Activated T-helper 2 cell treated with anti-CD3 and anti-CD28 coated beads, Interferon-gamma antibody, Interleukin-2, Interleukin-4, amounts not matched to agents 10 μg/mL and 5 μg/mL and 100 μg/mL, durations not matched to agents 14 hours and 24 hours and 36 hours (primary cell): ENCODE measurements at regions of chr7 and their contacts with region 1.

Region 1: GRCh38 chr7:127392566-127393367 is at the start of gene ZNF800:
- DNase-seq: peak; percentile 86
- H3K4me3 Mint-ChIP-seq: peak within 1 kb of the TSS; percentile 92
- H3K27ac Mint-ChIP-seq: peak within 1 kb of the TSS; percentile 92
- H3K4me1 Mint-ChIP-seq: peaks cover 58% of the 10 kb centered on the region
- H3K27me3 Mint-ChIP-seq: no peaks in the 10 kb centered on the region
- total RNA-seq, gene ZNF800: 40.2 and 40.8 TPM in 2 replicates

Region 2: GRCh38 chr7:127194571-127194970 is 198.2 kb before region 1 on chr7:
- intact Hi-C with region 1: no loop called
- DNase-seq: no peak
- H3K4me3 Mint-ChIP-seq: no peak overlapping the region
- H3K27ac Mint-ChIP-seq: no peak overlapping the region
- H3K4me1 Mint-ChIP-seq: no peaks in the 10 kb centered on the region
- H3K27me3 Mint-ChIP-seq: no peaks in the 10 kb centered on the region

Region 3: DNA sequence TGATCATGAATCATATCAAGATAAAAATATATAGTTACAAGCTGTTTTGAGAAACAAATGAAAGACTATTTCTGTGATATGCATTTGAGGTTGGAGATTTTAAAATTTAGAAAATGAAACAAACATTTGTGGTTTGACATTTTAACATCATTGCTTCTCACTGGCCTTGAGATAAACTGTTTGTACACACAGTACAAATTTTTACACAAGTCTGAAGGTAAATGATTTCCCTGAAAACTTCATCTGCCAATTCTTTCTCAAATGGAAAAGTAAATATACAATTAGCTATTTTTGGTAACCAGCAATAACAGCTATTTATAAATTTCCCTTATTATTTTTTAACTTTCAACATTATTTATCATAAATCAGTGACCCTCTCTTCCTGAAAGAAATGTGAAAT is 38.9 kb before region 1 on chr7:
- intact Hi-C with region 1: loop called (anchors 2 kb)
- DNase-seq: no peak
- H3K4me3 Mint-ChIP-seq: no peak overlapping the region
- H3K27ac Mint-ChIP-seq: no peak overlapping the region
- H3K4me1 Mint-ChIP-seq: peaks cover 23% of the 10 kb centered on the region
- H3K27me3 Mint-ChIP-seq: no peaks in the 10 kb centered on the region

Region 4: DNA sequence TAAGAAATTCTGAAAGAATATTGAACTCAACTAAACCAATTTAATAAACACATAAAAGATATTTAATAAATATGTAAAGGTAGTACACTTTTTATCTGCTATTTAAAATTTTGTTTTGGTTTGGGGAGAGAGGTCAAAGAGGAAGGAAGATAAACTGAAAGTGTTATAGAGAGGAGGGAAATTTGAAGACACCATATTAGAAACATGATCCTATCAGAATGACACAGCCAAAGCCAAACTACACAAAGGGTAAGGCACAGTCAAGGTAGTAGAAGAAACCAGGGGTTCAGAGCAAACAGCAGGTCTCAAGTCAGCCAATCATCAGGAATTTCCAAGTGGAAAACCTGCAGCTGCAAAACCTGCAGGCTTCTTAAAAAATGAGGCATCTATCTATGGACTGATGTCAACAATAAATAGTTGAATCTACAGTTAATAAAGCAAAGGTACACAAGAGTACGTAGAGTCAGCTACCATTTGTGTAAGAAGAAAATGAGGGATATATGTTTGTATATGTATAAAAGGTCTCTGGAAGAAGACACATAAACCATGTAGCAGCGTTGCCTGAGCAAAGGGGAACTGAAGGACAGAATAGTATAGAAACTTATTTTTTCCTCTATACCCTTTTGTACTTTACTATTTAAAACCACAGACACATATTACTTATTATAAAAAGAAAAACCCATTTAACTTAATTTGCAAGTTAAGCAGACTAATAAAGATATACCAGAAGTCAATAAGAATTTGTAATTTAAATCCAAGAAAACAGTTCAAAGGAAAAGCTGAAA is 10.3 kb before region 1 on chr7:
- intact Hi-C with region 1: loop called (anchors 1 kb)
- DNase-seq: no peak
- H3K4me3 Mint-ChIP-seq: no peak overlapping the region
- H3K27ac Mint-ChIP-seq: no peak overlapping the region
- H3K4me1 Mint-ChIP-seq: peaks cover 50% of the 10 kb centered on the region
- H3K27me3 Mint-ChIP-seq: no peaks in the 10 kb centered on the region

Region 5: GRCh38 chr7:127447326-127447945 is 54.7 kb after region 1 on chr7:
- intact Hi-C with region 1: loop called (anchors 5 kb)
- DNase-seq: peak; percentile 53
- H3K4me3 Mint-ChIP-seq: no peak overlapping the region
- H3K27ac Mint-ChIP-seq: no peak overlapping the region
- H3K4me1 Mint-ChIP-seq: peaks cover 7% of the 10 kb centered on the region
- H3K27me3 Mint-ChIP-seq: peaks cover 41% of the 10 kb centered on the region

Region 6: DNA sequence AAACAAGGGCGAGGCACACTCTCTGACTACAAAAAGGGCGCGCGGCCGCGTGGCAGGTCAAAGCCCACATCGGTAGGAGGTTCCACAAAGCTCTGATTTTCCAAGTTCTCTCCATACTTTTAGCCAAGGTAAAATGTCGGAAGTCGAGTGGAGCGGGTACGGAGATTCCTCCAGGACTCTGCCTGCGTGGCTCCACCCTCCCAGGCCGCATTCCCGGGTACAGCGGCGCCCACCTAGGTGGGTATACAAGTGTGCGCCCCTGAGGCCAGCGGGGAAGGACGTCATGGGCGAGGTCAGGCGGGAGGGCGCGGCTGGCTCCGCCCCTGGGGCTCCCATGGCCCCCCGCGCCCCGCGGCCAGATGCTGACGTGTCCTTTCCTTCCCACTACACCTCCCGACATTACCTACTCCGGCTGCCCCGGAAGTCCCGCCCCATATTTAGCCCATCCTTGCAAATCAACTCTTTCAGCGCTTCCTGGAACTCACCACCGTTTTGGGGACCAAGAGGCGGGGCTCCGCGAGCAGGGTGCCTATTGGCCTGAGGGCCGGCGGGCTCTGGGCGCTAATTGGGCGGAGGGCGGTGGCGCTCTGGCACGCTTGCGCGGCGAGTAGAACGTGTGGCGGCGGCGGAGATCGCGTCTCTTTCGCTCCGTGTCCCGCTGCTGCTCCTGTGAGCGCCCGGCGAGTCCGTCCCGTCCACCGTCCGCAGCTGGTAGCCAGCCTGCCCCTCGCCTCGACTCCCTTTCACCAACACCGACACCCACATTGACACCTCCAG is 259.0 kb after region 1 on chr7 and contains the start of gene SND1:
- intact Hi-C with region 1: loop called (anchors 5 kb)
- DNase-seq: peak; percentile 99
- H3K4me3 Mint-ChIP-seq: peak within 1 kb of the TSS; percentile 100
- H3K27ac Mint-ChIP-seq: peak within 1 kb of the TSS; percentile 99
- H3K4me1 Mint-ChIP-seq: peaks cover 31% of the 10 kb centered on the region
- H3K27me3 Mint-ChIP-seq: peaks cover 5% of the 10 kb centered on the region
- total RNA-seq, gene SND1: 311 TPM in 2 replicates